A549 (cell line): ENCODE measurements at regions of chr17 and their contacts with region 1.

Region 1: GRCh38 chr17:8118769-8119580 is 661 bp upstream of the ALOXE3 start:
- DNase-seq: peak; percentile 87 to 90
- ATAC-seq: peak; percentile 33 to 71
- H3K4me3 ChIP-seq: peak overlapping the region; percentile 51
- H3K27ac ChIP-seq: peak overlapping the region; percentile 67 to 90
- H3K4me1 ChIP-seq: peaks cover 13% of the 10 kb centered on the region
- CTCF ChIP-seq: peak; percentile 97
- EP300 ChIP-seq: no peak
- POLR2A ChIP-seq: no peak
- RAD21 ChIP-seq: peak; percentile 58 to 75

Region 2: GRCh38 chr17:8005960-8006730 is 112.8 kb before region 1 on chr17:
- CTCF ChIA-PET with region 1: no interaction called
- POLR2A ChIA-PET with region 1: no interaction called
- DNase-seq: peak in 1 of 2 experiments; percentile 64
- ATAC-seq: peak in 1 of 2 experiments; percentile 74; a peak in 3 of 6 replicates
- H3K4me3 ChIP-seq: no peak overlapping the region
- H3K27ac ChIP-seq: no peak overlapping the region
- H3K4me1 ChIP-seq: no peaks in the 10 kb centered on the region
- CTCF ChIP-seq: no peak
- EP300 ChIP-seq: no peak
- POLR2A ChIP-seq: no peak
- RAD21 ChIP-seq: no peak

Region 3: GRCh38 chr17:8066841-8067775 is 51.9 kb before region 1 on chr17:
- CTCF ChIA-PET with region 1: interaction called, 1,490 read pairs
- POLR2A ChIA-PET with region 1: no interaction called
- DNase-seq: no peak
- ATAC-seq: no peak
- H3K4me3 ChIP-seq: no peak overlapping the region
- H3K27ac ChIP-seq: no peak overlapping the region
- H3K4me1 ChIP-seq: peaks cover 12% of the 10 kb centered on the region; the same call in 1 of the 3 replicates
- CTCF ChIP-seq: no peak
- EP300 ChIP-seq: no peak
- POLR2A ChIP-seq: no peak
- RAD21 ChIP-seq: no peak

Region 4: GRCh38 chr17:8131844-8132441 is 13.0 kb after region 1 on chr17:
- CTCF ChIA-PET with region 1: interaction called, 92 read pairs
- POLR2A ChIA-PET with region 1: interaction called, 3 read pairs
- DNase-seq: no peak
- ATAC-seq: peak; percentile 15 to 64
- H3K4me3 ChIP-seq: no peak overlapping the region
- H3K27ac ChIP-seq: no peak overlapping the region
- H3K4me1 ChIP-seq: peaks cover 22% of the 10 kb centered on the region
- CTCF ChIP-seq: no peak
- EP300 ChIP-seq: no peak
- POLR2A ChIP-seq: no peak
- RAD21 ChIP-seq: no peak

Region 5: DNA sequence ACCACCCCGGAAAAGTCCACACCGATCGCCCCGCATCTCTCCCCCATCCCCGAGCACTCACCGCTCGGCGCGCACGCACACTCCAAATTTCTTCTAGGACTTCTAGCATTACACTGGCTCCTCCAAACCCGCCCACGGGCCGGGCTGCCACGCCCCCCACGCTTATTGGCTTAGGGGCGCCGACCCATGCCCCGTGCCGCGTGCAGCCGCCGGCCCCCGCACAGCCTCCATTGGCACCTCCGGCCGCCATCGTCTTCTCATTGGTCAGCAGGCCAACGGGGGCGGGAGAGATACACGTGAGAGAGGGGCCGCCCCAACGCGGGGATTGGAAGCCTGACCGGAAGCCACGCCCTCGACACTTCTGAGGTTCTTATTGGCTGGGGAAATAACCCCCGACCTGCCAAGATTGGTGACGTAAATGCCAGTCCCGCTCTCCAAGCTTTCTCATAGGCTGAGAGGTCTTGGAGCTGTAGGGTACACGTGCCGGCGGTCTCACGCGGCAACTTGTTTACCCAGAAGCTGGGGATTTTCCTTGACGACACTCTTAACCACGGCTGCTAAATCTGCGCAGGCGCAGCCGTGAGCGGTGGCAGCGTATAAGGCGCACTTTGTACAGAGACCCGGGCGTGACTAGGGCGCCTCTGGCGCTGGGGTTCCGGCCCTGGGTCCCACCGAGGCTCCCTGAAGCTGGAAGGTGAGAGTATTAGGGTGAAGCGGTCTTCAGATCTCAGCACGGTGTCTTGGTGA is 37.4 kb after region 1 on chr17:
- CTCF ChIA-PET with region 1: interaction called, 116 read pairs
- POLR2A ChIA-PET with region 1: interaction called, 11 read pairs
- DNase-seq: peak; percentile 100
- ATAC-seq: peak; percentile 57 to 73
- H3K4me3 ChIP-seq: peak overlapping the region; percentile 65
- H3K27ac ChIP-seq: peak overlapping the region; percentile 89 to 93
- H3K4me1 ChIP-seq: peaks cover 55% of the 10 kb centered on the region
- CTCF ChIP-seq: no peak
- EP300 ChIP-seq: no peak
- POLR2A ChIP-seq: peak; percentile 54
- RAD21 ChIP-seq: peak; percentile 33 to 40; a peak in 2 of 5 replicates

Region 6: DNA sequence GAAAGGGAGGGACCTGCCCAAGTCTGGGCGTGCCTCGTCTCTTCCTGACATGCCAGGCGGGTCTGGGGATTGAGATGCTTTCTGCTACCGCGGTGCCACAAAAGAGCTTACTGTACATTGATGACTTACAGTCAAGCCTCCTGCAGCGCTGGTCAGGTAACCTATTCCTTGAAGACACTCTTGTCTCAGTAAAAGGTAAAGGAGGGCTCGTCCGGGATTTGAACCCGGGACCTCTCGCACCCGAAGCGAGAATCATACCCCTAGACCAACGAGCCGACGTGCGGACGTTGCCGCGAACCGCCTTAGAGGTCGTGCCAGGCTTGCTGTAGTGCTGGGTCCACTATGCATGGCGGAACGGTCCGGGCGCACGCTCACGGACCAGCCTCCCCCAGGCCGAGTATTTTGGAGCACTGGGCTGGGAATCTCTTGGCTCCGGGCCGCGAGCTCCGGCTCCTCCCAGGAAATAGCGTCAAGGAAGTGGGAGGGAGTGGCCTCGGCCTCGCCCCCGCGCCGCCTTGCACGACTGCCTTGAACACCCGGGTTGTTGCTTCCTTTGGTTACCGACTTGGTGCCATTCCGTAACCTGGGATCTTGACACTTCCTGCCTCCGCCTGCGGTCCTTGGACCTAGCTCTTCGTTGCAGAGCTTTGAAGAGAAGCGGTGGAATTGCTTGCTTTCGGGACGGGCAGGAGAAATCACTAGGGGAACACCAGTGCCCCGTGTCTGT is 103.8 kb after region 1 on chr17:
- CTCF ChIA-PET with region 1: interaction called, 12 read pairs
- POLR2A ChIA-PET with region 1: interaction called, 8 read pairs
- DNase-seq: peak; percentile 85 to 98
- ATAC-seq: peak; percentile 38 to 64
- H3K4me3 ChIP-seq: peak overlapping the region; percentile 78
- H3K27ac ChIP-seq: peak overlapping the region; percentile 95 to 97
- H3K4me1 ChIP-seq: peaks cover 32% of the 10 kb centered on the region
- CTCF ChIP-seq: no peak
- EP300 ChIP-seq: no peak
- POLR2A ChIP-seq: peak; percentile 85
- RAD21 ChIP-seq: no peak

Region 7: GRCh38 chr17:8294814-8295316 is 175.9 kb after region 1 on chr17:
- CTCF ChIA-PET with region 1: no interaction called
- POLR2A ChIA-PET with region 1: interaction called, 10 read pairs
- DNase-seq: no peak
- ATAC-seq: peak; percentile 48
- H3K4me3 ChIP-seq: peak overlapping the region; percentile 48
- H3K27ac ChIP-seq: peak overlapping the region; percentile 89 to 93
- H3K4me1 ChIP-seq: peaks cover 16% of the 10 kb centered on the region
- CTCF ChIP-seq: no peak
- EP300 ChIP-seq: no peak
- POLR2A ChIP-seq: no peak
- RAD21 ChIP-seq: no peak

Region 8: DNA sequence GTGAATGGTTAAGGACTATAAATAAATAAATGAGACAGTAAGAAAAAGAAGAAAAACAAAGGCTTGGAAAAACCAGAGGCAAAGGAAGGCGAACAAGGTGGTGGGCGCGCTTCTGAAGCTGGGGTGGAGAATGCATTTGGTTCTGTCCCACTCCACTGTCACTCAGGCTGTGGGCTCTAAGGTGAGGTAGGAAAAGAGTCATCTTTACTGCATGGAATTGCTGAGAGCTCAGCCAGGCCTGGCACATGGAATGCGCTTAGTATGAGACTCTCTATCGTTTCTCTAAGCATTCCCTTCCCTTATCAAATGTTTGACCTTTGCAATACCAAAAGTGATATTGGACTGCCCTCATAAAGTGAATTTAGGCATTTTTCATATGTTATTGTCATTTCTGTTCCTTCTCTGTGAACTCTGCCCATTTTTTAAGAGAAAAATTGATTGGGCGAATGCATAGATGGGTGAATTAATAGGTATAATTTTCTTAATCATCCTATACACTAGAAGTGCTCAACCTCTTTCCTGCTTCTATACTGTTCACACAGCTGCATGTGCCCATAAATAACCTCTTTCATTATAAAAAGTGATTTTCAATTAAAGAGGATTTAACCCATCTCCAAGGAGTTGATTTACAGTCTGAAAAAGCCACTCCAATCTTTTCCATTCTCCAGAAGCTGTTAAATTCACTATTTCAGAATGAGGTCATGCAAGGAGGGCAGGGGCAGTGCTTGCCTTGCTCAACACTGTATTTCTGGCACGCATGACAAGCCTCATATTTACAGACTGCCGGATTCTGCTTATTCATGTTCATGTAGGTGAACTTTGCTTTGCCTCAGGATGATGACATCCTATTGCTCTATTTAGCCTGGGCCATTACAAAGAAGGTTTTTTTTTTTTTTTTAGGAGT is 423.9 kb after region 1 on chr17:
- CTCF ChIA-PET with region 1: no interaction called
- POLR2A ChIA-PET with region 1: no interaction called
- DNase-seq: peak; percentile 58 to 94
- ATAC-seq: peak; percentile 98 to 100
- H3K4me3 ChIP-seq: no peak overlapping the region
- H3K27ac ChIP-seq: peak overlapping the region; percentile 73 to 78
- H3K4me1 ChIP-seq: peaks cover 14% of the 10 kb centered on the region
- CTCF ChIP-seq: no peak
- EP300 ChIP-seq: peak; percentile 56 to 78; a peak in 2 of 5 replicates
- POLR2A ChIP-seq: no peak
- RAD21 ChIP-seq: peak in 1 of 2 experiments; percentile 27; a peak in 2 of 5 replicates